ENCODE measurements at regions of chr1 and their contacts with region 1.

Region 1: GRCh38 chr1:63593303-63593885 is at the start of gene PGM1:
- DNase-seq: peak; percentile 70
- H3K4me3 Mint-ChIP-seq: peak within 1 kb of the TSS; percentile 97
- H3K27ac Mint-ChIP-seq: peak within 1 kb of the TSS; percentile 99
- H3K4me1 Mint-ChIP-seq: peaks cover 33% of the 10 kb centered on the region
- H3K27me3 Mint-ChIP-seq: no peaks in the 10 kb centered on the region
- total RNA-seq, gene PGM1: 61.8 and 62.0 TPM in 2 replicates

Region 2: DNA sequence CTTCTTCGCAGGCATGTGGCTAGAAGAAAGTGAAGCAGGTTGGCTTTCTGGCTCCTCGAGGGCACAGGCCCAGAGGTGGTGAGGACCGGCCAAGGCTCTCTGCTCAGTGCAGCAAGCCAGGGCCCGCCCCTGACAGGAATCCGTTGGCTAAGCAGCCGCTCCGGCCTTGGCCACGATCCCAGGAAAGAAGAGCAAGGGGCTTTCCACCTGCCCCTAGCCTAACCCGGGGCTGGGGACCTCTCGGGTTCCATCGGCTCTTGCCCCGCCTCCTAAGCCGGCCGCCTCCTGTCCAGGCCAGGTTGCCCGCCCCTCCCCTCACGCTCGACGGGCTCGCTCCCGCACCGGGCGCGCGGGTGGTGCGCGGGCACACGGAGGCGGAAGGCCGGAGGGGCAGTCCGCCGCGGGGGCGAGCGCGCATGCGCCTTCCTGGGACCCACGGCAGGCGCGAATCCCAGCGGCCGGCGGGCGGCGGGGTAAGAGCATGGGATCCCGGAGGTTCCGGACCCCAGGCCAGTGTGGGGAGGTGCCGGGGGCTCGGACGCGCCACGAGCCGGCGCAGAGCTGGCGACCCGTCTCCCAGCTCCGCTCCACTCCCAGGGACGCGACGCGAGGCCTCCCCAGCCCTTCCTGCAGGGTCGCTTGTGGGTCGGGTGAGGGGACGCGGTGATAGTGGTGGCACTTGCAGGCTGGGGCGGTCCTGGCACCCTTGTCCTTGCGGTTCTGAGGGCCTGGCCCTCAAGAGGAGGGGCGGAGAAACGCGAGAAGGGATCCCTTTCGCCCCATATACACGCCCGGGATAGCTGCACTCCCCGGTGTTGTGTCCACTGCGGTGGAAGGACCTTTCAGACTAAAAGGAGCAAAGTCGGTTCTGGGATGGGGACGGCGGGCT is 225.9 kb before region 1 on chr1 and contains the start of gene ALG6:
- intact Hi-C with region 1: loop called (anchors 1 kb)
- DNase-seq: peak; percentile 89
- H3K4me3 Mint-ChIP-seq: peak within 1 kb of the TSS; percentile 96
- H3K27ac Mint-ChIP-seq: peak within 1 kb of the TSS; percentile 84
- H3K4me1 Mint-ChIP-seq: peaks cover 19% of the 10 kb centered on the region
- H3K27me3 Mint-ChIP-seq: peaks cover 13% of the 10 kb centered on the region
- total RNA-seq, gene ALG6: 25.3 and 25.5 TPM in 2 replicates

Region 3: DNA sequence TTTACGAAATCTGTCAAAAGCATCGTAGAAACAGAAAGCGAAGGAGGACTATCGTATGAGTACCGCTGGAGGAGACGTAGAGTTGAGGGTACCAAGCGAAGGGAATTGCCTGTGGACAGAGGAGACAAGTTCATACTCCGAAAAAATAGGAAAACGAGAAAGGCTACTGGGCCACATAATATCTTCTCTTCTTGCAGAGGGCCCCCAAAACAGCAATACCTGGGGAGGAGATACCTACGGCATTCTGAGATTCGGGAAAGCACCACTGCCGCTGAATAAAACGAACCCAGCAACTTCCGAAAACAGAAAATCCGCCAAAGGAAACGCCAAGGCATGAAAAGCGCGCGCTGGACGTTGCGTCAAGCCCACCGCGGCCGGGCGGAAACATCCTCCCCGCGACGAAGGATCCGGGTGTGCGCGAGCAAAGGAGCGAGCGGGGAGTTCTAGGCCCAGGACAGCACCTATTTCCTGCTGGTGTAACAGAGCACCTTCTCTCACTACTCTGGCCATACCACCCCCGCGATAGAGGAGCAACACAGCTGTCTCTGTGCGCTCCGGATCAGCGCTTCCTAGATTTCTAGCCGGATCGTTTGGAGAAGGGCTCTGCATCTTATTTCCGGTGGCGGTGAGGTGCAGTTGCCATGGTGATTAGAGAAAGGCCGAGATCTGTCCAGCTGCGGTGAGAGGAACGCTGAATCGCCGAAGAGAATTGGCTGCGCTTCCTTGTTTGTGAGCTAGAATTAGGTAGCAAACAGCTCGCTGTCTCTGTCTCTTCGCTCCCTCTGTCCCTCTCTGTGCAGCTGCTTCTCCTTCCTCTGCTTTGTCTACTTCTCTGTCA is 70.3 kb before region 1 on chr1 and contains the starts of genes EFCAB7 and ITGB3BP:
- intact Hi-C with region 1: loop called (anchors 1 kb)
- DNase-seq: peak; percentile 82
- H3K4me3 Mint-ChIP-seq: peak within 1 kb of the TSS; percentile 97
- H3K27ac Mint-ChIP-seq: peak within 1 kb of the TSS; percentile 98
- H3K4me1 Mint-ChIP-seq: peaks cover 36% of the 10 kb centered on the region
- H3K27me3 Mint-ChIP-seq: no peaks in the 10 kb centered on the region
- total RNA-seq, gene EFCAB7: 6.5 and 6.6 TPM in 2 replicates
- total RNA-seq, gene ITGB3BP: 49.3 and 52.2 TPM in 2 replicates

Region 4: GRCh38 chr1:63651161-63651701 is 57.8 kb after region 1 on chr1:
- intact Hi-C with region 1: loop called (anchors 1 kb)
- DNase-seq: peak; percentile 38
- H3K4me3 Mint-ChIP-seq: peak overlapping the region; percentile 71
- H3K27ac Mint-ChIP-seq: peak overlapping the region; percentile 93
- H3K4me1 Mint-ChIP-seq: peaks cover 44% of the 10 kb centered on the region
- H3K27me3 Mint-ChIP-seq: no peaks in the 10 kb centered on the region

Measured in activated T-helper 2 cell treated with anti-CD3 and anti-CD28 coated beads, Interferon-gamma antibody, Interleukin-2, Interleukin-4, amounts not matched to agents 10 μg/mL and 5 μg/mL and 100 μg/mL, durations not matched to agents 14 hours and 24 hours and 36 hours (primary cell).